HEK293 (cell line): ENCODE measurements at regions of chr9 and their contacts with region 1.

Region 1: DNA sequence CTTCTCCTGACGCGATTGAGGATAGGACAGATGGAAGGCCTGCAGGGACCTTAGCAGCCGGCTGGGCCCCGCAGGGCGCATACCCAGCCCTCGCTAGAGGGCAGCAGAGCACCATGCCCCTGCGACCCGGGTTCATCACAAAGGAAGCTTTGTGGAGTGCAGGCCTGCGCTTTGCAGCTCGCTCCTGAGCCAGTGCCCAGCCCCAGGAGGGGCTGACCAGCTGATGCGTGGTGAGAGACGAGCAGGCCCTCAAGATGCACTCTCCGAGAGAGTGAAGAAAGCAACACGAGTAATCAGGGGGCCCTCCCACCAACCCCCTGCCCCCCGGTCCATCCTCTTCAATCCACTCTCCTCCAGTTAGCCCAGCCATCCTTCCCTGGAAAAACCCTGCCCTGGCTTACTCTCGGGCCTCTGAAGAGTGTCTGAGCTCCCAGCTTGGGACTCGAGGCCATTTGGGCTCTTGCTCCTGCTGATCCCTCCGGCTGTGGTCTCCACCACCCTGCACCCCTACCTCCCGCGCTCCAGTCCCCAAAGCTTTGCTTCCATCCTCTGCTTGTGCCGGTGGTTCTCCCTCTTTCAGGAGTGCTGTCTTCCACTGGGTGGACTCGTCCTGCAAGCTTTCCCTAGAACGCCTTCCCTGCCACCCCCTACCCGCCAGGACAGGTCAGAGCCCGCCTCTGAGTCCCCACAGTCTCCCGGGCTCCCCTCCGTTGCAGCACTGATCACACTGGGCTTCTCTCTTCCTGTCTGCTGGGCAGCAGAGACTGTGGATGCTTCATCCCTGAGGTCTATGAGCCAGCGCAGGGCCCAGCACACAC is 9.1 kb upstream of the KIF12 start:
- H3K4me3 ChIP-seq: no peak overlapping the region
- H3K27ac ChIP-seq: no peak overlapping the region
- H3K4me1 ChIP-seq: no peaks in the 10 kb centered on the region
- CTCF ChIP-seq: peak; percentile 82

Region 2: GRCh38 chr9:114082017-114082762 is 26.0 kb before region 1 on chr9:
- CTCF ChIA-PET with region 1: interaction called, 139 read pairs
- POLR2A ChIA-PET with region 1: no interaction called
- H3K4me3 ChIP-seq: no peak overlapping the region
- H3K27ac ChIP-seq: no peak overlapping the region
- H3K4me1 ChIP-seq: no peaks in the 10 kb centered on the region
- CTCF ChIP-seq: peak; percentile 60

Region 3: GRCh38 chr9:114141553-114142402 is 33.6 kb after region 1 on chr9:
- CTCF ChIA-PET with region 1: interaction called, 22 read pairs
- POLR2A ChIA-PET with region 1: interaction called, 3 read pairs
- H3K4me3 ChIP-seq: no peak overlapping the region
- H3K27ac ChIP-seq: no peak overlapping the region
- H3K4me1 ChIP-seq: no peaks in the 10 kb centered on the region
- CTCF ChIP-seq: no peak

Region 4: GRCh38 chr9:114163517-114163951 is 55.3 kb after region 1 on chr9:
- CTCF ChIA-PET with region 1: interaction called, 14 read pairs
- POLR2A ChIA-PET with region 1: no interaction called
- H3K4me3 ChIP-seq: no peak overlapping the region
- H3K27ac ChIP-seq: no peak overlapping the region
- H3K4me1 ChIP-seq: no peaks in the 10 kb centered on the region
- CTCF ChIP-seq: no peak

Region 5: DNA sequence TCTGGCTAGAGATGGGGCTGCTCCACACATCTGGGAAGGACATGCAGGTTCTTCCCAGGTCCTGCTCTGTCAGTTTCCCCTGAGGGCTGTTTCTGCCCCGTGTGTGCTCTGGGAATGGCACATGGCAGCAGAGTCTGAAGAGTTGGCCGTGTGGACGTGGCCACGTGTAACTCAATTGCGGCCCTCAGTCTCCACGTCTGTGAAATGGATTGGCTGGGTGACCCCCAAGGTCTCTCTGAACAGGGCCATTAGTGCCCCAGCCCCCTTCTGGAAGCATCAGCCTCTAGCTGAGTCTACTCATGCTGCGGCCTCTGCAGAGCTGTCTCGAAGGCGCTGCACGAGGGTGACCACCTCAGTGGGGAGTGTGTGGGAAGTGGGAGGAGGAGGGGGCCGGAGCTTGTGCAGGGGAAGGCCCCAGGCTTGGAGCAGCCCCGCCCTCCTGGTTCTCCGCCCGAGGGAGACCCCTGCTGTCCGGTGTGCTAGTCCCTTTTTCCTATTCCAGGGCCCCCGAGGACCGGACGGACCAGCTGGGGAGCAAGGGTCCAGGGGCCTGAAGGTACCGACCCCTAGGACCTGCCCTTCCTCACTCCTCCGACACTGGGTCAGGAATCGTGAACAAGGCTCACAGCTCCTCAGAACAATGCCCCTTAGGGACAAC is 155.8 kb after region 1 on chr9:
- CTCF ChIA-PET with region 1: interaction called, 12 read pairs
- POLR2A ChIA-PET with region 1: no interaction called
- H3K4me3 ChIP-seq: no peak overlapping the region
- H3K27ac ChIP-seq: no peak overlapping the region
- H3K4me1 ChIP-seq: no peaks in the 10 kb centered on the region
- CTCF ChIP-seq: no peak

Region 6: GRCh38 chr9:114291064-114291474 is 182.8 kb after region 1 on chr9:
- CTCF ChIA-PET with region 1: interaction called, 225 read pairs
- POLR2A ChIA-PET with region 1: interaction called, 9 read pairs
- H3K4me3 ChIP-seq: no peak overlapping the region
- H3K27ac ChIP-seq: no peak overlapping the region
- H3K4me1 ChIP-seq: no peaks in the 10 kb centered on the region
- CTCF ChIP-seq: peak; percentile 49; the same call in 1 of the 2 replicates

Region 7: GRCh38 chr9:114314881-114315722 is 206.9 kb after region 1 on chr9:
- CTCF ChIA-PET with region 1: interaction called, 14 read pairs
- POLR2A ChIA-PET with region 1: no interaction called
- H3K4me3 ChIP-seq: no peak overlapping the region
- H3K27ac ChIP-seq: no peak overlapping the region
- H3K4me1 ChIP-seq: no peaks in the 10 kb centered on the region
- CTCF ChIP-seq: no peak